CD4-positive, alpha-beta T cell (primary cell): ENCODE measurements at regions of chr14 and their contacts with region 1.

Region 1: DNA sequence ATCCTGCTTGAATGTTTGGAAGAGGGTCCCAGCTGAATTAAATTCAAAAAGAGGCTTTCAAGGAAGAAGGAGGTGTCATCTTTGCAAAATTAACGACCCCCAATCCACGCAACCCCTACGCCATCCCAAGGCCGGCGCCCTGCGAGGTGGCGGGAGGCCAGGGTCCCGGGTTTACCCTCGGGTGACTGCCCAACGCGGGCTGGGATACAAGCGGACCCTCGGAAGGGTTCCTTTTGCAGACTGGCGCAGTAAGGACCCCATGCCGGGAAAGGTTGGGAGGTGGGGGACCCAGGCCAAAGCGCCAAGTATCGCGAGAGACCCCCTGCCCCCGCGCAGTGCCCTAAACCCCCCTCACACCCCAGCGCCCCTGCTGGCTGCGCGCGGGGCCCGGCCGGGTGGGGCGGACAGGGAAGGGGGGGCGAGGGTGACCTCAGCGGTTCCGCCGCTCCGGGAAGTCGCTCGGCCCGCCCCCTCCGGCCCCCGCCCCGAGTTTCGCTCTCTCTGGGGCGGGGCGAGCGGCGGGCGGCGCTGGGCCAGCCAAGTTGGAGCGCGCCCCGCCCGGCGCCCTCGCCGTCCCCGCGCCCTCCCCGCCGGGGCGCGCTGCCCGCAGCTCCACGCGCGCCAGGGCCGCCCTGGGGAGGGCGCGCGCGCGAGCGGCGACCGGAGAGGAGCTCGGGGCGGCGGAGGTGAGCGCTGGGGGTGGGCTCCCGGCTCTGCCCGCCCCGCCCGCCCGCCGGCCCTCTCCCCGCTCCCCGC is 708 bp upstream of the ZBTB42 start:
- DNase-seq: peak; percentile 59 to 94 (median 84)
- ATAC-seq: peak; percentile 63
- H3K4me3 ChIP-seq: peak overlapping the region; percentile 55
- H3K4me3 Mint-ChIP-seq: peak overlapping the region; percentile 79
- H3K27ac ChIP-seq: peak overlapping the region; percentile 50 to 82
- H3K27ac Mint-ChIP-seq: peak overlapping the region; percentile 71
- H3K4me1 ChIP-seq: peaks cover 55% of the 10 kb centered on the region
- H3K4me1 Mint-ChIP-seq: peaks cover 36% of the 10 kb centered on the region
- H3K27me3 ChIP-seq: no peaks in the 10 kb centered on the region
- H3K27me3 Mint-ChIP-seq: no peaks in the 10 kb centered on the region
- CTCF ChIP-seq: peak; percentile 10

Region 2: DNA sequence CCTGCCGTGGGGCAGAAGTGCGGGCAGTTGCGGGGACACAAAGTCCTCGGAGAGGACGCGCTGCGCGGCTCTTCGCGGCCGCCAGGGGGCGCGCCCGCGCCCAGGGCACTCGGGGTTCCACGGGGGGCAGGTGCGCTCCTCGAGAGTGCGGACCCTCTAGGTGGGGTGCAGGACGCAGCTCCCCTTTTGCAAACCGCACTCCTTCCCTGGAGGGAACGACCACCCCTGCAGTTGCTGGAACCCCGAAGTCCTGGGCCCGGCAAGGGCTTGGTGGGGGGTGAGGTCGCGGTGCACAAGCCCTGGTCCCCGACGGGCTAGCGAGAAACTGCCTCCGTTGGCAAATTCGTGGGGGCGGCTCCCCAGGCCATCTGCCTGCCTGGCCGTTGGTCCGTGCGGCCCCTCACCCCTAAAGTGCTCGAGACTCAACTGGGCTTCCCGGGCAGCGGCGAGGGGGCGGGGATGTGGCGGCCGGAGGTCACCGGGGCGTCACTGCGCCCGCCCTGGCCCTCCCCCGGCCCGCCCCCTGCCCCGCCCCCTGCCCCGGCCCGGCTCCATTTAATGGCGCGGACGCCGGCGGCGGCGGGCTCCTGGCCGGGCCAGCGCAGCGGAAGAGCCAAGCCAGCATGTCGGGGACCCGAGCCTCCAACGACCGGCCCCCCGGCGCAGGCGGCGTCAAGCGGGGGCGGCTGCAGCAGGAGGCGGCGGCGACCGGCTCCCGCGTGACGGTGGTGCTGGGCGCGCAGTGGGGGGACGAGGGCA is 76.4 kb before region 1 on chr14 and contains the start of gene ADSS1:
- CTCF ChIA-PET with region 1: no interaction called
- POLR2A ChIA-PET with region 1: interaction called, 3 read pairs
- intact Hi-C with region 1: loop called in 1 of 2 experiments (anchors 2 kb)
- DNase-seq: peak; percentile 31 to 83 (median 52)
- ATAC-seq: peak; percentile 79
- H3K4me3 ChIP-seq: peak within 1 kb of the TSS; percentile 87
- H3K4me3 Mint-ChIP-seq: peak within 1 kb of the TSS; percentile 70
- H3K27ac ChIP-seq: no peak within 1 kb of the TSS
- H3K27ac Mint-ChIP-seq: no peak within 1 kb of the TSS
- H3K4me1 ChIP-seq: peaks cover 17% of the 10 kb centered on the region
- H3K4me1 Mint-ChIP-seq: no peaks in the 10 kb centered on the region
- H3K27me3 ChIP-seq: peaks cover 0 to 4% of the 10 kb centered on the region in 2 experiments
- H3K27me3 Mint-ChIP-seq: no peaks in the 10 kb centered on the region
- CTCF ChIP-seq: peak; percentile 96
- total RNA-seq, gene ADSS1: 2.0 to 2.7 TPM

Region 3: GRCh38 chr14:104826189-104826860 is 26.1 kb after region 1 on chr14:
- CTCF ChIA-PET with region 1: interaction called, 14 read pairs
- POLR2A ChIA-PET with region 1: interaction called, 13 read pairs
- intact Hi-C with region 1: loop called in 1 of 2 experiments (anchors 1 kb)
- DNase-seq: peak; percentile 87 to 99 (median 94)
- ATAC-seq: peak; percentile 91
- H3K4me3 ChIP-seq: peak overlapping the region; percentile 74
- H3K4me3 Mint-ChIP-seq: peak overlapping the region; percentile 91
- H3K27ac ChIP-seq: no peak overlapping the region
- H3K27ac Mint-ChIP-seq: no peak overlapping the region
- H3K4me1 ChIP-seq: peaks cover 23% of the 10 kb centered on the region
- H3K4me1 Mint-ChIP-seq: peaks cover 29% of the 10 kb centered on the region
- H3K27me3 ChIP-seq: no peaks in the 10 kb centered on the region
- H3K27me3 Mint-ChIP-seq: peaks cover 10% of the 10 kb centered on the region
- CTCF ChIP-seq: peak; percentile 74

Region 4: GRCh38 chr14:104865644-104866441 is 65.7 kb after region 1 on chr14:
- CTCF ChIA-PET with region 1: interaction called, 3 read pairs
- POLR2A ChIA-PET with region 1: interaction called, 7 read pairs
- intact Hi-C with region 1: loop called in 1 of 2 experiments (anchors 2 kb)
- DNase-seq: peak in 5 of 14 experiments; percentile 18 to 52 (median 45)
- ATAC-seq: peak; percentile 43
- H3K4me3 ChIP-seq: peak overlapping the region; percentile 34
- H3K4me3 Mint-ChIP-seq: peak overlapping the region; percentile 81
- H3K27ac ChIP-seq: no peak overlapping the region
- H3K27ac Mint-ChIP-seq: no peak overlapping the region
- H3K4me1 ChIP-seq: peaks cover 22% of the 10 kb centered on the region
- H3K4me1 Mint-ChIP-seq: peaks cover 6% of the 10 kb centered on the region
- H3K27me3 ChIP-seq: peaks cover 12 to 17% of the 10 kb centered on the region in 2 experiments
- H3K27me3 Mint-ChIP-seq: peaks cover 12% of the 10 kb centered on the region
- CTCF ChIP-seq: no peak